Left cardiac atrium (tissue), 4 donors: ENCODE measurements at regions of chr15 and their contacts with region 1.

Region 1: GRCh38 chr15:64841258-64842095 is at the start of gene PLEKHO2:
- DNase-seq: peak; percentile 98
- ATAC-seq: peak; percentile 90 to 91
- total RNA-seq, gene PLEKHO2: 21.3 to 27.0 TPM

Region 2: DNA sequence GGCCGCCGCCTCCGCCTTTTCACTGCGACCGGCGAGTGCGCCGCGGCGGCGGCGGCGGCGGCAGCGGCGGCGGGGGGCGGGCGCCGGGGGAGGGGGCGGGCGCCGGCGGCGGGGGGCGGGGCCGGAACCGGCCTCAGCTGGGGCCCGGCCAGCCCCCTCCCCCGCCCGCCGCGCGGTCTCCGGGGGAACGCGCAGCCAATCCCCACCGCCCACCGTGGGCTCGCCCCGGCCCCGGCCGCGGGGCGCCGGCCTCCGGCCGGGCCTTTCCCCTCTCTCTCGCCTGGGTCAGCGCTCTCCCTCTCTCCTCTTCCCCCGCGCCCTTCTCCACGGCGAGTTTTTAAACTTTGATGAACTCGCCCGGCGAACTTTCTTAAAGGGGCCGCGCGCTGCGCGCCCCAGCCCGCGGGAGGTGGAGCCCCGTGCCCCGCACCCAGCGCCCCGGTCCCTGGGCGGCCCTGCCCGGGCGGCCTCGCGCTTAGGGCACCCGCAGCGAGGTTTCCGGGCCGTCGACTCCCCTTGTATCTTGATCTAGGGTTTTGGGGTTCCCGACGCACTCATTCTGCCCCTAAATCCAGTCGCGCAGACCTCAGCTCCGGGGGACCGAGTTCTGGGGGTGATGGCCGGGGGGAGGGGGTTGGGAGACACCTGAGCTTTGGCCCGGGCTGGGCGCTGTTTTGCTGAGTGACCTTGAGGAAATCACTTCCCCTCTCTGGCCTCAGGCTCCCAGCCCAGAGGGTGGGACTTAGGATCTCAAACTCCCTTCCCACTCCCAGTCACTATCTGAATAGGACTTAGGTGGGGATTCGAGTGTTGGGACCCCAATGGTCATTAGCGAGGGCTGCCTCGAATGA is 65.7 kb before region 1 on chr15 and contains the start of gene RBPMS2:
- intact Hi-C with region 1: no loop called
- DNase-seq: peak; percentile 49
- ATAC-seq: peak; percentile 66 to 80
- total RNA-seq, gene RBPMS2: 312 to 403 TPM

Region 3: GRCh38 chr15:64893481-64894394 is 52.3 kb after region 1 on chr15:
- intact Hi-C with region 1: loop called (anchors 5 to 10 kb)
- DNase-seq: peak; percentile 96
- ATAC-seq: peak; percentile 79 to 84

Region 4: GRCh38 chr15:64989416-64990167 is 148.1 kb after region 1 on chr15 and contains the start of gene SPG21:
- intact Hi-C with region 1: loop called in 1 of 2 experiments (anchors 10 kb)
- DNase-seq: peak; percentile 94
- ATAC-seq: peak; percentile 97
- total RNA-seq, gene SPG21: 54.0 to 58.6 TPM